Activated naive CD4-positive, alpha-beta T cell treated with anti-CD3 and anti-CD28 coated beads for 36 hours (primary cell): ENCODE measurements at regions of chr16 and their contacts with region 1.

Region 1: GRCh38 chr16:28950648-28951409 is at the start of gene NFATC2IP:
- DNase-seq: peak; percentile 100
- H3K4me3 Mint-ChIP-seq: peak within 1 kb of the TSS; percentile 94
- H3K27ac Mint-ChIP-seq: peak within 1 kb of the TSS; percentile 93
- H3K4me1 Mint-ChIP-seq: peaks cover 32% of the 10 kb centered on the region
- H3K27me3 Mint-ChIP-seq: no peaks in the 10 kb centered on the region
- total RNA-seq, gene NFATC2IP: 55.5 to 58.9 TPM

Region 2: DNA sequence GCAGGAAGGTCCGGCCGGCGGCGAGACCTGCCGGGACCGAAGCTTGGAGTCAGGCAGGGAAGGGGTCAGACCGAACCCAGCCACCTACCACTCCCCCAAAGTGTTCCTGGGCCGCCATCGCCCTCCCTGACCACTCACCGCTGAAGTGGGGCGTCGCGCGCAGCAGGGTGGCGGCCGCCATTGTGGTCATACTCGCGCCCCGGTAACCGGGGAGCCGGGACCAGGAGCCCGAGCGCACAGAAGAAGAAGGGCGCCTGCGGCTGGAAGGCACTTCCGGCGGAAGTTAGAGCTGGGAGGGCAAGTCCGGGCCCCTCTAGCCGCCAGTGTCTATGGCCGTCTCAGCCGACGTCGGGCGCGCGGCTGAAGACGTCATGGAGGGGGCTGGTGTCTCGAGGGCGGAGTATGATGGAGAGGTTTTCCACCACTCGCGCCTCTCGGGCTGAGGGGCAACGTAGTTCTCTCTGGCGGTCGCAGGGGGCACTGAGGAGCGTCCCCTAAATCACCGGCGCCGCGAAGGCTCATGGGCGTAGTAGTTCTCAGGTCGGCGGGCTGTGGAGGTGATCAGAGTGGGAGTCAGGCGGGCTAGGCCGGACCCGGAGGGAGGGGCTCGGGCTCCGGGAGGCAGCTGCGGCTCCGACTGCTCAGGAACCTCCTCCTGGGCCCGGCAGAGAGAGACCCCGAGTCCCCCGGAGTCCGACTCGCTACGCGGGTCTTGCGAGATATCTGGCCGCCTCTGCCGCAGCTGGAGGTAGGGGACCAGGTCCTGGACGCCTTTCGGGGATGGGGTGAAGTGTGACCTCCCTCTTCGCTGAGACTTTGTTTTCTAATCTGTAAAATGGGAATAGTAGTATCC is 104.5 kb before region 1 on chr16 and contains the start of gene TUFM:
- CTCF ChIA-PET with region 1: interaction called, 17 read pairs
- intact Hi-C with region 1: loop called (anchors 1 kb)
- DNase-seq: peak; percentile 98
- H3K4me3 Mint-ChIP-seq: peak within 1 kb of the TSS; percentile 98
- H3K27ac Mint-ChIP-seq: peak within 1 kb of the TSS; percentile 96
- H3K4me1 Mint-ChIP-seq: peaks cover 28% of the 10 kb centered on the region
- H3K27me3 Mint-ChIP-seq: no peaks in the 10 kb centered on the region
- total RNA-seq, gene TUFM: 276 to 289 TPM

Region 3: DNA sequence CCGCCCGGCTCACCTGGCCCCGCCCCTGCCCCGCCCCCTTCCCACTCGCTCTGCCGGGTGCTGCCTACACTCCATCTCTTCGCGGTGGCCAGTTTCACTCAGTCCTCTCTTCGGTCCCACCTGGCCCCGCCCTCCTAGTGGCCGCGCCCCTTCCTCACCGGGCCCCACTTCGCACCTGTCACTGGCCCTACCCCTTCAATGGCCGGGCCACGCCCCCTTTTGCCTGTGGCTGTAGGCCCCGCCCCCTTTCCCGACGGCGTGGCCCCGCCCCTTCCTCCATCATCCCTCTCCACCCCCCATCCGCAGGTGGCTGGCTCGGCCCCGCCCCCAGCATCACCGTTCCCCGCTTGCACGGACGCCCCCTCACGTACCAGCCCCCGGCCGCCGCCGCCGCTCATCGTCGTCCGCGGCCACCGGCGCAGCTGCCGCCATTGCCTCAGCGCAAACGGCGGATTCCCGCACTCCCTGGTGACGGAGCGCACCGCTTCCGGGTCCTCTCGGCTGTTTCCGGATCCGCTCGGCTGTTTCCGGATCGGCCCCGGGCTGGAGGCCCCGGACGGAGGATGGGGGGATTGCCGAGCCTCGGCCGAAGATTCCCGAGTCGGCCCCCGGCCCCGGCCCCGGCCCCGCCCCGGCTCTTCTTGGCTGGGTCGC is 26.0 kb before region 1 on chr16 and contains the start of gene RABEP2:
- CTCF ChIA-PET with region 1: no interaction called
- intact Hi-C with region 1: loop called (anchors 1 kb)
- DNase-seq: peak; percentile 97
- H3K4me3 Mint-ChIP-seq: peak within 1 kb of the TSS; percentile 97
- H3K27ac Mint-ChIP-seq: peak within 1 kb of the TSS; percentile 99
- H3K4me1 Mint-ChIP-seq: peaks cover 18% of the 10 kb centered on the region
- H3K27me3 Mint-ChIP-seq: no peaks in the 10 kb centered on the region
- total RNA-seq, gene RABEP2: 11.6 to 14.0 TPM

Region 4: GRCh38 chr16:28974437-28975157 is 23.8 kb after region 1 on chr16 and contains the start of gene SPNS1:
- CTCF ChIA-PET with region 1: interaction called, 3 read pairs
- intact Hi-C with region 1: loop called (anchors 1 kb)
- DNase-seq: peak; percentile 97
- H3K4me3 Mint-ChIP-seq: peak within 1 kb of the TSS; percentile 97
- H3K27ac Mint-ChIP-seq: peak within 1 kb of the TSS; percentile 91
- H3K4me1 Mint-ChIP-seq: peaks cover 34% of the 10 kb centered on the region
- H3K27me3 Mint-ChIP-seq: no peaks in the 10 kb centered on the region
- total RNA-seq, gene SPNS1: 10.3 to 10.5 TPM

Region 5: GRCh38 chr16:29007730-29008593 is 57.1 kb after region 1 on chr16:
- CTCF ChIA-PET with region 1: no interaction called
- intact Hi-C with region 1: loop called (anchors 2 kb)
- DNase-seq: peak; percentile 92
- H3K4me3 Mint-ChIP-seq: peak overlapping the region; percentile 20
- H3K27ac Mint-ChIP-seq: peak overlapping the region; percentile 83
- H3K4me1 Mint-ChIP-seq: peaks cover 52% of the 10 kb centered on the region
- H3K27me3 Mint-ChIP-seq: no peaks in the 10 kb centered on the region